Activated CD4-positive, alpha-beta T cell treated with anti-CD3 and anti-CD28 coated beads, Interleukin-2, amount 10 ng/mL, durations not matched to agents 7 days and 5 days (primary cell): ENCODE measurements at regions of chr10 and their contacts with region 1.

Region 1: GRCh38 chr10:73730153-73730906 is 13.8 kb upstream of the SEC24C start:
- DNase-seq: peak; percentile 94
- H3K4me3 Mint-ChIP-seq: peak overlapping the region; percentile 95
- H3K27ac Mint-ChIP-seq: peak overlapping the region; percentile 97
- H3K4me1 Mint-ChIP-seq: peaks cover 15% of the 10 kb centered on the region
- H3K27me3 Mint-ChIP-seq: no peaks in the 10 kb centered on the region

Region 2: GRCh38 chr10:73717556-73717955 is 12.8 kb before region 1 on chr10:
- CTCF ChIA-PET with region 1: no interaction called
- POLR2A ChIA-PET with region 1: no interaction called
- DNase-seq: no peak
- H3K4me3 Mint-ChIP-seq: no peak overlapping the region
- H3K27ac Mint-ChIP-seq: no peak overlapping the region
- H3K4me1 Mint-ChIP-seq: peaks cover 5% of the 10 kb centered on the region
- H3K27me3 Mint-ChIP-seq: no peaks in the 10 kb centered on the region

Region 3: DNA sequence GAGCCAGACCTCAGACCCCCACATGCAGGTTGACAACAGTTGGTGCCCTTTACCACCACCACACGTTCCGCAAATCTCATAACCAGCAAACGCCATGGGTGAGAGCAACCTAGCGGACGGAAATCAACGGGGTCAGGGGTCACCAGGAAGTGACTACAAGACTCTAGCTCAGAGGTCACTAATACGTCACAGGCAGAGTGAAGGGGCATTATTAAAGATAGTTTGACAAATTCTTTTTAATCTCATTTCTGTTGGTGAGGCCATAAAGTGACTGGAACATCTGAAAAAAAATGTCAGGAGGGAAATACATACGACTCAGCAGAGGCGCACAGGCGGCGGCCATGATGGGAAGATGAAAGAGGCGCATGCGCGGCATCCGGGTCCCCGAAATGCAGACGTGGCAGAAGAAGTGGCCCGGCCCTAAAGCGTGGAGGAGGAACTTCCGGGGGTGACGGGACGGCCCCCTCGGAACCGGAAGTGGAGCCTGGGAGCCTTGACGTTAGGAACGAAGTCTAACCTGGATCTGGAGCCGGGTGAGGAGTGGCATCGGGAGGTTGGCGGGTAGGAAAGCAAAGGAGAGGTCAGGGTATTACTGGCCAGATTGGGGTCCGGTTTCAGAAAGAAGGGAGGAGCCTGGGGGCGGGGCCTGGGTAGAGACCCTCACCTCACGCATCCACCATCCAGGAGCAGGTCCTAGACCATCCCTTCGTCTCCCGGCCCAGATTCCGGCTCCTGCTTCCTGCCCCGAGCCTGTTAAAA is 13.8 kb after region 1 on chr10 and contains the start of gene SEC24C:
- CTCF ChIA-PET with region 1: interaction called, 21 read pairs
- POLR2A ChIA-PET with region 1: no interaction called
- DNase-seq: peak; percentile 97
- H3K4me3 Mint-ChIP-seq: peak within 1 kb of the TSS; percentile 100
- H3K27ac Mint-ChIP-seq: peak within 1 kb of the TSS; percentile 100
- H3K4me1 Mint-ChIP-seq: peaks cover 35% of the 10 kb centered on the region
- H3K27me3 Mint-ChIP-seq: no peaks in the 10 kb centered on the region
- total RNA-seq, gene SEC24C: 93.1 to 93.2 TPM